ENCODE measurements at regions of chr15 and their contacts with region 1.

Region 1: GRCh38 chr15:98442379-98442833 is 205.9 kb upstream of the IGF1R start:
- DNase-seq: peak; percentile 57
- ATAC-seq: peak; percentile 94
- H3K4me3 ChIP-seq: no peak overlapping the region
- H3K27ac ChIP-seq: no peak overlapping the region
- H3K4me1 ChIP-seq: no peaks in the 10 kb centered on the region; a peak in 1 of 4 replicates
- H3K27me3 ChIP-seq: peaks cover 9% of the 10 kb centered on the region; the same call in 1 of the 2 replicates
- CTCF ChIP-seq: peak; percentile 58 to 91 (median 87)
- POLR2A ChIP-seq: no peak
- RAD21 ChIP-seq: peak; percentile 87

Region 2: DNA sequence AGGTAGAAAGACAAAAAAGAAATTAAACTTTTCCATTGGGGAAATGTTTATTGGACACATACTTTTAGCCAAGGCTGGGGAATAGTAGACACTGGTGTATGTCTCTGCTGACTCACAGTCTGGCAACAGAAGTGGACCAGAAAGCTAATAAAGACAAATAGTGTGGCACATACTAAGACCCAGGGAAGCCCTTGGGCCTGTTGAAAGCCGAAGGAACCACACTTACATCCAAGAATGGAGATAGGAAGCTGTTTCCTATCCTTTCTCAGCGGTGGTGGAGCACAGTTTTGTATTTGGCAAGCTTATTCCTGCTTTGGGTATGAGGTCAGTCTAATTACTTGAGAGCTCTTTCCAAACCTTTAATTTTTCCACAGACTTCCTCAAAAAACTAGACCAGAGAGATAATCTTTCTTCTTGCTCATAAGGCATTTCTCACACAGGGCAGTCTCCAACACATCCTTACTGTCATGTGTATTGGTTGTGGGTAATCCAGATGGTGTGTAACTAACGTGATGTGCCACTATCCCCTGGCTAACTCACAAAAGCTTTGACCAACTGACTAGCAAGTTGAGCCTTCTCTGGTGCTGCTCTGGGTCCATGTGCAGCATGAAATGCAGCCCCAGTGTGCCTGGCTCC is 73.2 kb before region 1 on chr15:
- CTCF ChIA-PET with region 1: no interaction called
- POLR2A ChIA-PET with region 1: no interaction called
- RAD21 ChIA-PET with region 1: no interaction called
- intact Hi-C with region 1: no loop called
- DNase-seq: no peak
- ATAC-seq: no peak
- H3K4me3 ChIP-seq: no peak overlapping the region
- H3K27ac ChIP-seq: no peak overlapping the region
- H3K4me1 ChIP-seq: no peaks in the 10 kb centered on the region
- H3K27me3 ChIP-seq: peaks cover 12% of the 10 kb centered on the region; the same call in 1 of the 2 replicates
- CTCF ChIP-seq: no peak
- POLR2A ChIP-seq: no peak
- RAD21 ChIP-seq: no peak

Region 3: GRCh38 chr15:98658831-98659699 is 216.7 kb after region 1 on chr15:
- CTCF ChIA-PET with region 1: no interaction called
- POLR2A ChIA-PET with region 1: no interaction called
- RAD21 ChIA-PET with region 1: no interaction called
- intact Hi-C with region 1: loop called (anchors 1 kb)
- DNase-seq: peak; percentile 33
- ATAC-seq: peak; percentile 98
- H3K4me3 ChIP-seq: no peak overlapping the region
- H3K27ac ChIP-seq: no peak overlapping the region
- H3K4me1 ChIP-seq: no peaks in the 10 kb centered on the region; a peak in 1 of 4 replicates
- H3K27me3 ChIP-seq: peaks cover 13% of the 10 kb centered on the region; the same call in 1 of the 2 replicates
- CTCF ChIP-seq: peak; percentile 83 to 92 (median 86)
- POLR2A ChIP-seq: no peak
- RAD21 ChIP-seq: peak; percentile 86

Region 4: DNA sequence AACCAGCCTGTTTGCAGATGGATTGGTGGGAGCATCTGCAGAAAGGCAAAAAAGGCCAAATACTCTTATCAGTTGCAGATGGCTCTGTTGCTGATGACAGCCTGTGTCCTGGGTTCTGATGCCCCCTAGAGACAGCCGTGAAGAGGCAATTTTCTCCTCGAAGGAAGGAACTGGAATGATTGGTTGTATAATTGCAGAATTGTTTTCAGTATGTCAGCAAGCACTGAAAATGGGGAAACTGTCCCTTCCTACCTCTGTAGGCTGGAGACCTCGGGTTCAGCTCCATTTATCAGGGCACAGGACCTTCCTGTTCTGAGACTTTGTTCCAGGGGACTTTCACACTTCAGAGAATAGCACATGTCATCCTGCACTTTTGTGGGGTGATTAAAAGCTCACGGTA is 462.1 kb after region 1 on chr15:
- CTCF ChIA-PET with region 1: no interaction called
- POLR2A ChIA-PET with region 1: no interaction called
- RAD21 ChIA-PET with region 1: no interaction called
- intact Hi-C with region 1: loop called (anchors 5 kb)
- DNase-seq: peak; percentile 18
- ATAC-seq: peak; percentile 92
- H3K4me3 ChIP-seq: no peak overlapping the region
- H3K27ac ChIP-seq: no peak overlapping the region
- H3K4me1 ChIP-seq: peaks cover 0 to 11% of the 10 kb centered on the region in 2 experiments; a peak in 2 of 4 replicates
- H3K27me3 ChIP-seq: no peaks in the 10 kb centered on the region
- CTCF ChIP-seq: peak; percentile 60 to 77 (median 73); a peak in 5 of 6 replicates
- POLR2A ChIP-seq: no peak
- RAD21 ChIP-seq: peak; percentile 77

Region 5: GRCh38 chr15:99059010-99059981 is 616.9 kb after region 1 on chr15:
- CTCF ChIA-PET with region 1: no interaction called
- POLR2A ChIA-PET with region 1: no interaction called
- RAD21 ChIA-PET with region 1: no interaction called
- intact Hi-C with region 1: loop called (anchors 1 kb)
- DNase-seq: peak; percentile 6
- ATAC-seq: peak; percentile 96
- H3K4me3 ChIP-seq: peak overlapping the region; percentile 28 to 39; a peak in 2 of 4 replicates
- H3K27ac ChIP-seq: no peak overlapping the region
- H3K4me1 ChIP-seq: peaks cover 0 to 9% of the 10 kb centered on the region in 2 experiments; a peak in 1 of 4 replicates
- H3K27me3 ChIP-seq: peaks cover 5% of the 10 kb centered on the region; the same call in 1 of the 2 replicates
- CTCF ChIP-seq: peak; percentile 14 to 58 (median 57); a peak in 4 of 6 replicates
- POLR2A ChIP-seq: no peak
- RAD21 ChIP-seq: peak; percentile 43

Region 6: DNA sequence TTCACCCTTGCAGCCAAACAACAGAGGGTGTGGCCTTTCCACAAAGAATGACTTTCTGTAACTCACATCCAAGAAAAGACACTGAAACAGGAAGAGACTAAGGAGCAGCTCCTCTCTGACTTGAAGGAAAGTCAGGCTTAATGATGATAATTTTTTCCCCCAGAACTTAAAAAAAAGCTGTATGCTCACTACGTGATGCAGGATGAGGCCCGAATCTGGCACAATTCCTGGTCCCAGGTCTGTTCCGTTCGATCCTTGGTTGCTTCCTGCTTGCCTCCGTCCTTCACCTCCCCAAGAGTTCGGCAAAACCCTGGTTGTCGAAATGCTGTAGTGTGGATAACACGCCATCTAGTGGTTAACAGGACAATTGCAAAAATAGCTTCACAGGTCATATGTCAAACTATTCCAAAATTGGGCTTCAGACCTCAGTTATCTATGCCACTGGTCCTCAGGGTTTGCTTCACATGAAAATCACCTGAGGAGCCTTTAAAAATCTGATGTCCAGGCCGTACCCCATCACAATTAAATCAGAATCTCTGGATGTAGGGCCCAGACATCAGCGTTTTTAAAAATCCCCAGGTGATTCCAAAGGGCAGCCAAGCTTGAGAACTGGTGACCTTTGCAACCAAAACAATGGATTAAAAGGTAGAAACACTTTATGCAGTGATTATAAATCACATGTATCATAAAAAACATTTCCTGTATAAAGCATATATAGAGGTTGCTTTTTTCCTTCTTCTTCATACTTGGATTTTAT is 634.3 kb after region 1 on chr15:
- CTCF ChIA-PET with region 1: interaction called, 10 read pairs
- POLR2A ChIA-PET with region 1: no interaction called
- RAD21 ChIA-PET with region 1: no interaction called
- intact Hi-C with region 1: loop called (anchors 1 kb)
- DNase-seq: peak; percentile 68
- ATAC-seq: peak; percentile 96
- H3K4me3 ChIP-seq: peak overlapping the region; percentile 14 to 48; a peak in 3 of 4 replicates
- H3K27ac ChIP-seq: no peak overlapping the region
- H3K4me1 ChIP-seq: peaks cover 0 to 2% of the 10 kb centered on the region in 2 experiments; a peak in 2 of 4 replicates
- H3K27me3 ChIP-seq: no peaks in the 10 kb centered on the region
- CTCF ChIP-seq: peak; percentile 80 to 88 (median 83)
- POLR2A ChIP-seq: no peak
- RAD21 ChIP-seq: peak; percentile 96

Region 7: DNA sequence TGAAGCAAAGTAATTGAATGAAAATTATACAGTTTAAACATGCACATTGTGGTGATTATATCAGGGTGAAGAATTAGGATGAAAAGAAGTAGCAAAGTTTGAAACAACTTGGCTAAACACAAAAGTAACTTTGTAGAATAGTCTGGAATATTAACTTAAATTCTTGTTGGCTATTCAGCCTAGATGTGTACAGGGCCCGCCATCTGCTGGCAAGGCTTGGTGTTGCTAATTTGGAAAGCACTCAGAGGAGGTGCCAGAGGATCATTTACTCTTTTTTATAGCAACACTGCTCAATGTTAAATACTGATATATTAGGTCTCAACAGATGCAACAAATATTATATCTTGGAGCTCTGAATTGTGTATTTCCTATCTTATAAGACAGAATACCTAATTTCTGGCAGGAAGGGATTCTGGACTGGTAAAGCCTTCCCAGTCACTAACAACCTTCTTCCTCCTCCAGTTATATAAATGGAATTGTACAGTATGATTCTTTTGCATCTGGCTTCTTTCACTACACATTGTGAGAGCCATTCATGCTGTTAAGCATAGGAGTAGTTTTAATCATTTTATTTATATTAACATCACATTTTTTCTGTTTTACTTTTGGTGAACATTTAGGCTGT is 770.9 kb after region 1 on chr15:
- CTCF ChIA-PET with region 1: no interaction called
- POLR2A ChIA-PET with region 1: no interaction called
- RAD21 ChIA-PET with region 1: no interaction called
- intact Hi-C with region 1: loop called (anchors 2 kb)
- DNase-seq: peak; percentile 32
- ATAC-seq: peak; percentile 86
- H3K4me3 ChIP-seq: no peak overlapping the region
- H3K27ac ChIP-seq: no peak overlapping the region
- H3K4me1 ChIP-seq: no peaks in the 10 kb centered on the region
- H3K27me3 ChIP-seq: no peaks in the 10 kb centered on the region
- CTCF ChIP-seq: peak; percentile 85 to 97 (median 93)
- POLR2A ChIP-seq: no peak
- RAD21 ChIP-seq: peak; percentile 95

Measured in HCT116 (cell line).